Calu3 (cell line): ENCODE measurements at regions of chr1 and their contacts with region 1.

Region 1: GRCh38 chr1:223556414-223557129 is 108.9 kb downstream of the CAPN8 start:
- DNase-seq: peak; percentile 89
- H3K4me3 Mint-ChIP-seq: no peak overlapping the region
- H3K27ac Mint-ChIP-seq: no peak overlapping the region
- H3K4me1 Mint-ChIP-seq: peaks cover 2% of the 10 kb centered on the region
- H3K27me3 Mint-ChIP-seq: no peaks in the 10 kb centered on the region
- CTCF ChIP-seq: peak; percentile 96

Region 2: GRCh38 chr1:223531742-223532341 is 24.7 kb before region 1 on chr1:
- CTCF ChIA-PET with region 1: no interaction called
- intact Hi-C with region 1: no loop called
- DNase-seq: peak; percentile 85
- H3K4me3 Mint-ChIP-seq: no peak overlapping the region
- H3K27ac Mint-ChIP-seq: no peak overlapping the region
- H3K4me1 Mint-ChIP-seq: no peaks in the 10 kb centered on the region
- H3K27me3 Mint-ChIP-seq: peaks cover 58% of the 10 kb centered on the region
- CTCF ChIP-seq: peak; percentile 87

Region 3: GRCh38 chr1:223611936-223612335 is 55.4 kb after region 1 on chr1:
- CTCF ChIA-PET with region 1: interaction called, 22 read pairs
- intact Hi-C with region 1: no loop called
- DNase-seq: no peak
- H3K4me3 Mint-ChIP-seq: no peak overlapping the region
- H3K27ac Mint-ChIP-seq: no peak overlapping the region
- H3K4me1 Mint-ChIP-seq: no peaks in the 10 kb centered on the region
- H3K27me3 Mint-ChIP-seq: no peaks in the 10 kb centered on the region
- CTCF ChIP-seq: no peak

Region 4: GRCh38 chr1:223670458-223671168 is 114.0 kb after region 1 on chr1:
- CTCF ChIA-PET with region 1: interaction called, 18 read pairs
- intact Hi-C with region 1: no loop called
- DNase-seq: peak; percentile 70
- H3K4me3 Mint-ChIP-seq: no peak overlapping the region
- H3K27ac Mint-ChIP-seq: no peak overlapping the region
- H3K4me1 Mint-ChIP-seq: peaks cover 42% of the 10 kb centered on the region
- H3K27me3 Mint-ChIP-seq: no peaks in the 10 kb centered on the region
- CTCF ChIP-seq: peak; percentile 88

Region 5: GRCh38 chr1:223695941-223696340 is 139.4 kb after region 1 on chr1:
- CTCF ChIA-PET with region 1: interaction called, 10 read pairs
- intact Hi-C with region 1: no loop called
- DNase-seq: no peak
- H3K4me3 Mint-ChIP-seq: no peak overlapping the region
- H3K27ac Mint-ChIP-seq: no peak overlapping the region
- H3K4me1 Mint-ChIP-seq: peaks cover 28% of the 10 kb centered on the region
- H3K27me3 Mint-ChIP-seq: no peaks in the 10 kb centered on the region
- CTCF ChIP-seq: no peak

Region 6: GRCh38 chr1:223765036-223765718 is 208.6 kb after region 1 on chr1:
- CTCF ChIA-PET with region 1: no interaction called
- intact Hi-C with region 1: no loop called
- DNase-seq: peak; percentile 49
- H3K4me3 Mint-ChIP-seq: no peak overlapping the region
- H3K27ac Mint-ChIP-seq: no peak overlapping the region
- H3K4me1 Mint-ChIP-seq: peaks cover 17% of the 10 kb centered on the region
- H3K27me3 Mint-ChIP-seq: no peaks in the 10 kb centered on the region
- CTCF ChIP-seq: no peak